ENCODE measurements at regions of chr5 and their contacts with region 1.

Region 1: DNA sequence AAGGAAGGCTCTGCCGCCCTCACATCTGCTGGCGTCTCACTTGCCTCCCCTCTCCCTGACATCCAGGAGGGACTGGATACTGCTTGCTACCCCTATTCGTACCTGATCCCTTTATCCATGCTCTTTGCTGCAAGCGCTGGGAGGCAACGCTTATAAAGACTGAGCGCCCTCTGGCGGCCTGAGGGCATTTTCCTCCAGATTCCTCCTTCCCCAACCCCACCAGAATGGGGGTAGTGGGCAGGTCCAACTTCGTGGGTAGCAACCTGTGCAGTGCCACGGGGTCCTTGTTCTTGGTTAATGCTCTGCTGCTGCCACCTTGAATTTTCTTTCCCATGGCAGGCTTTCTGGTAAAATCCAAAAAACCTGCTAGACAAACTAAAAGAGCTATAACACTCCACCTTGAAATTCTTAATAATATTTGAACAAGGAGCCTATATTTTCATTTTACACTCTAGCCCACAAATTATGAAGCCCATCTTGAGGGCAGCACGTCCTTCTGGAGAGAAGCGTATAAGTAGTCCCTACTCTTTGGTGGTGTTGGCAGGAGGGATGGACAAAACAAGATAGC is 52.4 kb downstream of the JADE2 start:
- DNase-seq: peak; percentile 37
- H3K4me3 ChIP-seq: no peak overlapping the region
- H3K27ac ChIP-seq: peak overlapping the region; percentile 21
- H3K27me3 ChIP-seq: no peaks in the 10 kb centered on the region
- CTCF ChIP-seq: peak; percentile 88

Region 2: DNA sequence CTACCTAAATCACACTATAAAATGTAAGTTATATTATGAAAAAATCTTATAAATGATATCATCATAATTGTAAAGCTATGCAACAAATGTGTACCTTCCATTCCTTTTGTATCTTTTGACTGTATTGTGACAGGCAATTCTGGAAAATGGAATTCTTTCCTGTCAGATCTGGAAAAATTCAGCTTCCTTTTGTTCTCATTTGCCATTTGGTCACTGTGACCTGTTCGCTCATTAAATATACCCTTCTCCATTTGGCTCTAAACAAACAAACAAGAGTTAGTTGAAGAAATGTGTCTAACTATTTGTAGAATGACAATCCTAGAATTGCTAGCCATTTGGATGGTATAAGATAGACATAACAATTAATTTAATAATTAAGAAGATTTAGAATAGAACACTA is 273.6 kb before region 1 on chr5:
- CTCF ChIA-PET with region 1: interaction called, 39 read pairs
- POLR2A ChIA-PET with region 1: no interaction called
- DNase-seq: no peak
- H3K4me3 ChIP-seq: no peak overlapping the region
- H3K27ac ChIP-seq: no peak overlapping the region
- H3K27me3 ChIP-seq: no peaks in the 10 kb centered on the region
- CTCF ChIP-seq: no peak

Region 3: GRCh38 chr5:134411546-134412266 is 166.2 kb before region 1 on chr5 and contains the start of gene CDKN2AIPNL:
- CTCF ChIA-PET with region 1: interaction called, 17 read pairs
- POLR2A ChIA-PET with region 1: no interaction called
- DNase-seq: peak; percentile 61
- H3K4me3 ChIP-seq: peak within 1 kb of the TSS; percentile 79
- H3K27ac ChIP-seq: peak within 1 kb of the TSS; percentile 39
- H3K27me3 ChIP-seq: no peaks in the 10 kb centered on the region
- CTCF ChIP-seq: peak; percentile 67
- polyA plus RNA-seq, gene CDKN2AIPNL: 16.7 and 20.8 TPM in 2 replicates

Region 4: GRCh38 chr5:134541736-134542376 is 36.0 kb before region 1 on chr5:
- CTCF ChIA-PET with region 1: interaction called, 15 read pairs
- POLR2A ChIA-PET with region 1: interaction called, 3 read pairs
- DNase-seq: no peak
- H3K4me3 ChIP-seq: no peak overlapping the region
- H3K27ac ChIP-seq: no peak overlapping the region
- H3K27me3 ChIP-seq: no peaks in the 10 kb centered on the region
- CTCF ChIP-seq: no peak